ENCODE measurements at regions of chr2 and their contacts with region 1.

Region 1: GRCh38 chr2:27281855-27282559 is at the start of gene TRIM54:
- DNase-seq: no peak
- ATAC-seq: no peak
- H3K4me3 Mint-ChIP-seq: no peak within 1 kb of the TSS
- H3K27ac Mint-ChIP-seq: no peak within 1 kb of the TSS
- H3K4me1 Mint-ChIP-seq: peaks cover 10% of the 10 kb centered on the region
- H3K27me3 Mint-ChIP-seq: peaks cover 52% of the 10 kb centered on the region
- total RNA-seq, gene TRIM54: 0.28 TPM in 1 of 2 experiments, not detected in the other

Region 2: GRCh38 chr2:27095745-27096651 is 186.0 kb before region 1 on chr2:
- CTCF ChIA-PET with region 1: interaction called, 74 read pairs
- DNase-seq: peak; percentile 65
- ATAC-seq: peak; percentile 88
- H3K4me3 Mint-ChIP-seq: no peak overlapping the region
- H3K27ac Mint-ChIP-seq: no peak overlapping the region
- H3K4me1 Mint-ChIP-seq: peaks cover 7% of the 10 kb centered on the region
- H3K27me3 Mint-ChIP-seq: no peaks in the 10 kb centered on the region

Region 3: GRCh38 chr2:27249891-27250651 is 31.9 kb before region 1 on chr2:
- CTCF ChIA-PET with region 1: interaction called, 51 read pairs
- DNase-seq: peak; percentile 70
- ATAC-seq: peak; percentile 83
- H3K4me3 Mint-ChIP-seq: no peak overlapping the region
- H3K27ac Mint-ChIP-seq: no peak overlapping the region
- H3K4me1 Mint-ChIP-seq: no peaks in the 10 kb centered on the region
- H3K27me3 Mint-ChIP-seq: peaks cover 22% of the 10 kb centered on the region

Region 4: DNA sequence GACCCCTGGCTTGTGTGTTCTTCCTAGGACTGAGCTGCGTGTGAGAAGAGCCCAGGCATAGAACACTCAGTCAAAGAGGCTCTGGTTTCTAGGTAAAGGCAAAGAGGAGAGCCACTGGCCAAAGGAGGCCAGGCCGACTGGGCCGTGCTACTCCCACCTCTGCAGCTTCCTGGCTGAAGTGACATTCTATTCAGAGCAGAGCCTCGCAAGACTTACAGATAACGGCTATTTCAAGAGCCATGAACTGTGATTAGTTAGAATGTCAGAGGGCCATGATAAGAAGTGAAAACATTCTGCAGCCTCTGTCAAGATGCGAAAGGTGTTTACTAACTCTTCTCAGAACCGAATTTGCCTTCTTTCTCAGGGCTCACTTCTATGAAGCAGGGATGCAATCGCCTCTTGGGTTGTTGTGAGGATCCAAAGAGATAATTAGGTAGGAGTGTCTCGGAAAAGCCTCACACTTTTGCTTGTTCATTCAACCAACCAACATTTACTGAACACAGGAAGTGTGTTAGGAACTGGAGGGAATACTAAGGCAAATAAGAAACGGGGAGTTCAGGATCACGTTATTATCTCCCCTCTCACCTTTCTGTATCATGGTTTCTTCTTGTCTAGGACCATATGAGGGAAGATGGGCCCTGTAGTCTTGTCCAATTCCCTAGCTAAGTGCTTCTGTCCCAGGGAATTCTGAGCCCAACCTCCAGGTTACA is 10.2 kb before region 1 on chr2:
- CTCF ChIA-PET with region 1: interaction called, 65 read pairs
- DNase-seq: no peak
- ATAC-seq: no peak
- H3K4me3 Mint-ChIP-seq: no peak overlapping the region
- H3K27ac Mint-ChIP-seq: no peak overlapping the region
- H3K4me1 Mint-ChIP-seq: peaks cover 4% of the 10 kb centered on the region
- H3K27me3 Mint-ChIP-seq: peaks cover 20% of the 10 kb centered on the region